Astrocyte of the cerebellum (primary cell): ENCODE measurements at regions of chr9 and their contacts with region 1.

Region 1: GRCh38 chr9:136363606-136364370 is at the start of gene DNLZ:
- DNase-seq: peak; percentile 53
- H3K4me3 ChIP-seq: peak within 1 kb of the TSS; percentile 60
- CTCF ChIP-seq: peak; percentile 85

Region 2: GRCh38 chr9:136275655-136276429 is 87.9 kb before region 1 on chr9:
- in situ Hi-C with region 1: loop called (anchors 10 kb)
- DNase-seq: no peak
- H3K4me3 ChIP-seq: no peak overlapping the region
- CTCF ChIP-seq: no peak

Region 3: DNA sequence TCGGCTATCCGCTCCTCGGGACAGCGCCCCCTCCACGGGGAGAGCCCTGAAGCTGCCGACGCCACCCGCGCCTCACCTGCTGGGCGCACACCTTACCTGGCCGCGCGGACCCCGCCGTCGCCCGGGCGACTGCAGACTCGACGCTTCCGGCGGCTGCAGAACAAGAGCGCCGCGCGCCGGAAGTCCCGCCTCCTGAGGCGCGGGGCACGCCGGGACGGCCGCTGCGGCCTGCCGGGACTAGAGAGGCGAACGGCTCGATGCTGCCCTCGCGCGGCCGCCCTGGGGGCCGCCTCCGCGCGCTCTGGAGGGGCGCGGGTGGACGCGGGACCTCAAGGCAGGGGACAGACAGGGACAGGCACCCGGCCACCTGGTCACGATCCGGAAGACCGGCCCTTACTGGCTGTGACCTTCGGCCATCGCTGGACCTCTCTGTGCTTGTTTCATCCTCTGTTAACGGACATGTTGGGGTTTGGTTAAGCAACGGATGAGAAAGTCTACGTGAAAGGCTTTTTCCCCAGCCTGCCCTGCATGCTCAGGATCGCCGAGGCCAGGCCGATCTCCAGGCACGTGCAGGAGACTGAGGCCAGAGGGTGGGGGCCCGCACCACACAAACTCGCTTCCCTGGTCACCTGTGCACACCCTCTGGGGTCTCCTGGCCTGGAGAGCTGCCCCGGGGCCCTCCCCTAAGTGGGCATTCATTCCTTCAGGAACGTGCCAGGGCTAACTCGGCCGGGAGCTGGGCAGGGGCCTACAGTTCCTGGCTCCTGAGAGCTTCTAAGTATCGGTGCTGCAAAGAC is 36.4 kb after region 1 on chr9 and contains the start of gene SNAPC4:
- in situ Hi-C with region 1: no loop called
- DNase-seq: peak; percentile 51
- H3K4me3 ChIP-seq: peak within 1 kb of the TSS; percentile 90
- CTCF ChIP-seq: peak; percentile 75

Region 4: GRCh38 chr9:136451221-136451877 is 87.6 kb after region 1 on chr9:
- in situ Hi-C with region 1: no loop called
- DNase-seq: no peak
- H3K4me3 ChIP-seq: no peak overlapping the region
- CTCF ChIP-seq: no peak